Heart left ventricle (tissue), 16 donors: ENCODE measurements at regions of chr10 and their contacts with region 1.

Region 1: DNA sequence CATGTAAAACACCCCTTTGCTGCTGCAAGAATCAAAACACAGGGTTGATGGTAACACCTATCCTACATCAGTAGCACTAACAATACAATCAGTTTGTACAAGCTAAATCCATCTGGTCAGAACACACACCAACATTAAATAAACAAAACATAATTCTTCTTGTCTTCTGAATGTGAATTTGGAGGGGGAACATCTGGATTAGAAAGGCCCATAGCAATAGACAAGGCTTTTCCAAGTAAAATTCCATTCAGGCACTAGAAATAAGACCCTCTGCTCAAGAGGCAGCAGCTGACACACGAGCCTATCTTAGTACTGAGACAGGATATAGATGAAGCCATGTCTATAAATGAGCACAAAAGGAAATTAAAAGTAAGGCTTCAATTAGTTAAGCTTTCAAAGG is 839.9 kb upstream of the LRRTM3 start:
- DNase-seq: no peak
- ATAC-seq: no peak
- H3K4me3 ChIP-seq: no peak overlapping the region
- H3K27ac ChIP-seq: no peak overlapping the region
- H3K4me1 ChIP-seq: no peaks in the 10 kb centered on the region
- H3K27me3 ChIP-seq: no peaks in the 10 kb centered on the region
- CTCF ChIP-seq: no peak
- POLR2A ChIP-seq: no peak

Region 2: DNA sequence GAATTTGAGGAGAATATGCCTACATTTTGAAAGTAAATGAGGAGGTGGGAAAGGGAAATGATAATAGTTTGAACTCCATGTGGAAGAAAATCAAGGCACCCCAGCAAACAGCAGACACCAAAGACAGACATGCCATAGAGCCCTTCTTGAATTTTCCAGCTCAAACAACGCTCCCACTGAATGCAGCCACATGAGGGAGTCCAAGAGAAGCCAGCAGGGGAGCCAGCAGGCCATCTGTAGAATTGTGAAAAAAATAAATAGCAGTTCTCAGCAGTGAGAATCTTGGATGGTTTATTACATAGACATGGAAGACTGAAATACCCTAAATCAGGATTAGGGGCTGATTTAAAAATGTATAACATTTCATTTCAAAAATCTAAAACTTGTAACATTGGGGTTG is 727.3 kb before region 1 on chr10:
- intact Hi-C with region 1: loop called in 1 of 10 experiments (anchors 10 kb)
- DNase-seq: no peak
- ATAC-seq: no peak
- H3K4me3 ChIP-seq: no peak overlapping the region
- H3K27ac ChIP-seq: no peak overlapping the region
- H3K4me1 ChIP-seq: no peaks in the 10 kb centered on the region
- H3K27me3 ChIP-seq: no peaks in the 10 kb centered on the region
- CTCF ChIP-seq: peak in 6 of 12 donors; percentile 10 to 44 (median 36)
- POLR2A ChIP-seq: no peak